CD4-positive, alpha-beta memory T cell (primary cell): ENCODE measurements at regions of chr20 and their contacts with region 1.

Region 1: DNA sequence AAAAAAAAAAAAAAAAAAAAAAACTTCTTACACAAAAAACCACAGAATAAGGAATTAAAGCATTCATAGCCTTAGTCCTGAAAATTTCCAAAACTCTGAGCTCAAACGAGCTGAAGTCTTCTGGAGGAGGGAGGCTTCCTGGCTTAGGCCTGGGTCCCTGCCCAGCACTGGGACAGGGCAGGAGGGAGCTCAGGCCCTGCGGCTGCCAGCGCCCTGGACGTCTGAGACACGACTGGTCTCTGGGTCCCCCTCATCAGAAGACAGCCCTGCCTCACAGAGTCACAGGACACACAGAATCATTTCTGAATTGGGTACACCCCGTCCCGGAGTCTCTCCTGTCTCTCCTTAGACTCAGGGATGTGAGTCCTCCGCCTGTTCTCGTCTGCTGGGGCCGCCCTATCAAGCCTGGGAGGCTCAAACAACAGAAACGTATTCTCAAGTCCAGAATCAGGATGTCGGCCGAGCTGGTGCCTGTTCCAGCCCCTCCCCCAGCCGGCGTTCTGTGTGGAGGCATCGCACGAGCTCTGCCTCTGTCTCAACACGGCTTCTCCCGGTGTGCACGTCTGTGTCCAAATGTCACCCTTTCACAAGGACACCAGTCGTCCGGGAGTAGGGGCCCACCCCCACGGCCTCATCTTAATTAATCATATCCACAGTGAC is 39.4 kb downstream of the ZBTB46 start:
- DNase-seq: no peak
- H3K4me3 ChIP-seq: no peak overlapping the region
- H3K4me3 Mint-ChIP-seq: no peak overlapping the region
- H3K27ac ChIP-seq: no peak overlapping the region
- H3K27ac Mint-ChIP-seq: no peak overlapping the region
- H3K4me1 ChIP-seq: no peaks in the 10 kb centered on the region
- H3K4me1 Mint-ChIP-seq: peaks cover 0 to 1% (median under 1%) of the 10 kb centered on the region in 4 donors
- H3K27me3 ChIP-seq: no peaks in the 10 kb centered on the region
- H3K27me3 Mint-ChIP-seq: peaks cover 7% of the 10 kb centered on the region in 2 donors

Region 2: DNA sequence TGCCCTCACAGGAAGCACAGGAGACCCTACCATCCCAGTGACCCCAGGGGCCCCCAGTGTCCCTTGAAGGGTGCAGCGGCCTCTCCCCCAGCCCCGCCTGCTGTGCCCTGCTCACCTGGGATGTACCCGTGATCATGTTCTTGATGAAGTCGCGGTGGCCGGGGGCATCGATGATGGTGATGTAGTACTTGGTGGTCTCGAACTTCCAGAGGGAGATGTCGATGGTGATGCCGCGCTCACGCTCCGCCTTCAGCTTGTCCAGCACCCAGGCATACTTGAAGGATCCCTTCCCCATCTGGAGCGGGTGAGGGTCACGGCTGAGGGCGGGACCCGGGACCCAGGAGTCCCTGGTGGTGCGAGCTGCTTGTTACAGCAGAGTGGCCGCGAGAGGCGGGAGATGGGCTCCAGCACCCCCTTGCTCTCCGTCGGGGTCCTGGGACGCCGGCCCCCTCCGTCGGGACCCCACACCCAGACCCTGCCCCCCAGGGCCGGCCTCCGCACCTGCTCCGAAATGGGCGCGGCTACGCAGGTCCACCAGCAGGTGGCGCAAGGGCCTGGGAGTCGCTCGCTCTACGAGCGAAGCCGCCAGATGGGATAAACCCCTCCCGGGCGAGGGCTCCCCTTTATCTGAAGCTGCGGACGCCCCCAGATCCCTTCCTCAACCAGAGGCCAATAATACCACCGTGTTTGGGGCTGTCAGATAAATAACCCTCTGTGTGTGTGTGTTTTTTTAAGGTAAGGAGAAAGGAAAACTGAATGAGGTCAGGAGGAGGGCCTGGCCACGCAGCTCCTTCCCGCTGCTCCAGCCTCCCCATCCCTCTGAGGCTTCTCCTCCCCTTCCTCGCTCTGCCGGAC is 295.7 kb before region 1 on chr20:
- CTCF ChIA-PET with region 1: interaction called, 4 read pairs
- POLR2A ChIA-PET with region 1: no interaction called
- intact Hi-C with region 1: loop called (anchors 2 kb)
- DNase-seq: peak; percentile 63 to 72 (median 68)
- H3K4me3 ChIP-seq: peak overlapping the region in 1 of 2 donors; percentile 43
- H3K4me3 Mint-ChIP-seq: peak overlapping the region in 7 of 8 donors; percentile 48 to 83 (median 71)
- H3K27ac ChIP-seq: no peak overlapping the region
- H3K27ac Mint-ChIP-seq: no peak overlapping the region
- H3K4me1 ChIP-seq: peaks cover 18% of the 10 kb centered on the region
- H3K4me1 Mint-ChIP-seq: peaks cover 1 to 8% (median 3%) of the 10 kb centered on the region in 4 donors
- H3K27me3 ChIP-seq: peaks cover 12% of the 10 kb centered on the region
- H3K27me3 Mint-ChIP-seq: peaks cover 5 to 9% of the 10 kb centered on the region in 2 donors

Region 3: DNA sequence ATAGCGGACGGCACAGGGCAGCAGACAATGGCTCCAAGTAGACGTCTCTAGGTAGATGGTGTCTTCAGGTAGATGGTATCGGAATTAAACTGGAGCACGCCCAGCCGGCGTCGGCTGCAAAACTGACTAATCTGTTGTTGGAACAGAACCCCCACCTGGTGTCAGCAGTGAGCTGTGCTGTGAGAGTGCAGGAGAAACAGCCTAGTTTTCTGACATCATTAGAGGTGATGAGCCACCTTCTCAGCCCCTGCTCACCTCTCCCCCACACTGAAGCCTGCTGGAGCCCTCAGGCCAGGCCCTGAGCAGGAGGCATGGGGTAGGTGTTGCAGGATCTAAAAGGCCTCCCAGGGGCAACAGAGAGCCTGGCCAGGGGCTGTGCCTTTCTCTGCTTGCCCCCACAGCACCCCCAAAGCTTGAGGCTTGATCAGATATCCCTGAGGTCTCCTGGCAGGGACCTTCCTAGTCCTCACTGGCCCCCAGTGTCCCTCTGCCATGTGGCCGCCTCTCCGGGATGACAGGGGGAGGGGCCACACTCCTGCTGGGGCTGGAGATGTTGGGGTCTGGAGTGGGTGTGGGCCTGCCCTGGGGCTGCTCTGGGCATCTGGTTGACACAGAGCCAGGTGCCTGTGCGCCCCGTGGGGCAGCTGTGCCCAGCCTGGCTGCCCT is 210.7 kb before region 1 on chr20:
- CTCF ChIA-PET with region 1: no interaction called
- POLR2A ChIA-PET with region 1: no interaction called
- intact Hi-C with region 1: loop called (anchors 1 kb)
- DNase-seq: peak; percentile 68 to 82 (median 78)
- H3K4me3 ChIP-seq: no peak overlapping the region
- H3K4me3 Mint-ChIP-seq: peak overlapping the region in 1 of 8 donors; percentile 43
- H3K27ac ChIP-seq: no peak overlapping the region
- H3K27ac Mint-ChIP-seq: peak overlapping the region in 2 of 7 donors; percentile 7 to 16
- H3K4me1 ChIP-seq: peaks cover 3% of the 10 kb centered on the region
- H3K4me1 Mint-ChIP-seq: peaks cover 1 to 13% (median 6%) of the 10 kb centered on the region in 4 donors
- H3K27me3 ChIP-seq: no peaks in the 10 kb centered on the region
- H3K27me3 Mint-ChIP-seq: no peaks in the 10 kb centered on the region

Region 4: GRCh38 chr20:64001607-64002011 is 210.0 kb after region 1 on chr20:
- CTCF ChIA-PET with region 1: no interaction called
- POLR2A ChIA-PET with region 1: no interaction called
- intact Hi-C with region 1: no loop called
- DNase-seq: no peak
- H3K4me3 ChIP-seq: no peak overlapping the region
- H3K4me3 Mint-ChIP-seq: peak overlapping the region in 1 of 8 donors; percentile 7
- H3K27ac ChIP-seq: no peak overlapping the region
- H3K27ac Mint-ChIP-seq: no peak overlapping the region
- H3K4me1 ChIP-seq: no peaks in the 10 kb centered on the region
- H3K4me1 Mint-ChIP-seq: peaks cover 0 to 13% (median 5%) of the 10 kb centered on the region in 4 donors
- H3K27me3 ChIP-seq: no peaks in the 10 kb centered on the region
- H3K27me3 Mint-ChIP-seq: no peaks in the 10 kb centered on the region